ENCODE measurements at regions of chr13 and their contacts with region 1.

Region 1: GRCh38 chr13:32538621-32539246 is at the start of gene N4BP2L2:
- DNase-seq: peak; percentile 70 to 94 (median 91)
- ATAC-seq: peak; percentile 98
- H3K4me3 ChIP-seq: peak within 1 kb of the TSS; percentile 78
- H3K4me3 Mint-ChIP-seq: peak within 1 kb of the TSS; percentile 94 to 100 (median 100)
- H3K27ac ChIP-seq: peak within 1 kb of the TSS; percentile 96
- H3K27ac Mint-ChIP-seq: peak within 1 kb of the TSS; percentile 99 to 100 (median 100)
- H3K4me1 ChIP-seq: peaks cover 32 to 39% of the 10 kb centered on the region in 2 donors
- H3K4me1 Mint-ChIP-seq: peaks cover 33 to 56% (median 50%) of the 10 kb centered on the region in 7 donors
- H3K27me3 ChIP-seq: no peaks in the 10 kb centered on the region
- H3K27me3 Mint-ChIP-seq: peaks cover 0 to 11% (median 3%) of the 10 kb centered on the region in 5 donors
- total RNA-seq, gene N4BP2L2: 136 to 358 (median 226) TPM

Region 2: GRCh38 chr13:32031025-32031814 is 507.5 kb before region 1 on chr13 and contains the start of gene FRY:
- CTCF ChIA-PET with region 1: no interaction called
- POLR2A ChIA-PET with region 1: no interaction called
- intact Hi-C with region 1: loop called in 1 of 2 experiments (anchors 5 kb)
- DNase-seq: peak; percentile 34 to 67 (median 58)
- ATAC-seq: peak; percentile 86
- H3K4me3 ChIP-seq: peak within 1 kb of the TSS; percentile 71
- H3K4me3 Mint-ChIP-seq: peak within 1 kb of the TSS; percentile 82 to 99 (median 90)
- H3K27ac ChIP-seq: peak within 1 kb of the TSS; percentile 72
- H3K27ac Mint-ChIP-seq: peak within 1 kb of the TSS; percentile 77 to 97 (median 83)
- H3K4me1 ChIP-seq: peaks cover 3 to 16% of the 10 kb centered on the region in 2 donors
- H3K4me1 Mint-ChIP-seq: peaks cover 7 to 65% (median 49%) of the 10 kb centered on the region in 7 donors
- H3K27me3 ChIP-seq: no peaks in the 10 kb centered on the region
- H3K27me3 Mint-ChIP-seq: peaks cover 7 to 49% (median 13%) of the 10 kb centered on the region in 5 donors
- total RNA-seq, gene FRY: 9.9 to 39.9 (median 24.0) TPM

Region 3: GRCh38 chr13:32427852-32428580 is 110.7 kb before region 1 on chr13 and contains the start of gene N4BP2L1:
- CTCF ChIA-PET with region 1: no interaction called
- POLR2A ChIA-PET with region 1: interaction called, 26 read pairs
- intact Hi-C with region 1: loop called (anchors 1 kb)
- DNase-seq: peak; percentile 60 to 91 (median 78)
- ATAC-seq: peak; percentile 81
- H3K4me3 ChIP-seq: peak within 1 kb of the TSS; percentile 64
- H3K4me3 Mint-ChIP-seq: peak within 1 kb of the TSS; percentile 90 to 100 (median 94)
- H3K27ac ChIP-seq: peak within 1 kb of the TSS; percentile 98
- H3K27ac Mint-ChIP-seq: peak within 1 kb of the TSS; percentile 95 to 99 (median 97)
- H3K4me1 ChIP-seq: peaks cover 19 to 20% of the 10 kb centered on the region in 2 donors
- H3K4me1 Mint-ChIP-seq: peaks cover 34 to 50% (median 48%) of the 10 kb centered on the region in 7 donors
- H3K27me3 ChIP-seq: no peaks in the 10 kb centered on the region
- H3K27me3 Mint-ChIP-seq: no peaks in the 10 kb centered on the region
- total RNA-seq, gene N4BP2L1: 30.4 to 58.0 (median 47.1) TPM

Region 4: DNA sequence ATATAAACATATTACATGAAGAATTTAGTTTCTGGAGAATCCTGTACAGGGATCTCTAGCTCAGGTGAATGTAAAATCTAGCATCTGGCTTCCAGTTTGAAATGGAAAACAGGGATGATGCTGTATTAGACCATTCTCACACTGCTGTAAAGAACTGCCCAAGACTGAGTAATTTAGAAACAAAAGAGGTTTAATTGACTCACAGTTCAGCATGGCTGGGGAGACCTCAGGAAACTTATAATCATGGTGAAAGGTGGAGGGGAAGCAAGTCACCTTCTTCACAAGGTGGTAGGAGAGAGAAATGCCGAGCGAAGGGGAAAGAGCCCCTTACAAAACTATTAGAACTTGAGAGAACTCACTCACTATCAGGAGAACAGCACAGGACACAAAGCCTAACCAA is 16.9 kb after region 1 on chr13:
- CTCF ChIA-PET with region 1: no interaction called
- POLR2A ChIA-PET with region 1: no interaction called
- intact Hi-C with region 1: no loop called
- DNase-seq: no peak
- ATAC-seq: no peak
- H3K4me3 ChIP-seq: no peak overlapping the region
- H3K4me3 Mint-ChIP-seq: no peak overlapping the region
- H3K27ac ChIP-seq: no peak overlapping the region
- H3K27ac Mint-ChIP-seq: no peak overlapping the region
- H3K4me1 ChIP-seq: no peaks in the 10 kb centered on the region
- H3K4me1 Mint-ChIP-seq: no peaks in the 10 kb centered on the region
- H3K27me3 ChIP-seq: no peaks in the 10 kb centered on the region
- H3K27me3 Mint-ChIP-seq: peaks cover 0 to 6% (median 5%) of the 10 kb centered on the region in 5 donors

Region 5: GRCh38 chr13:32650705-32651311 is 112.1 kb after region 1 on chr13:
- CTCF ChIA-PET with region 1: no interaction called
- POLR2A ChIA-PET with region 1: no interaction called
- intact Hi-C with region 1: loop called in 1 of 2 experiments (anchors 5 kb)
- DNase-seq: peak in 8 of 9 donors; percentile 16 to 55 (median 41)
- ATAC-seq: peak; percentile 91
- H3K4me3 ChIP-seq: no peak overlapping the region
- H3K4me3 Mint-ChIP-seq: no peak overlapping the region
- H3K27ac ChIP-seq: no peak overlapping the region
- H3K27ac Mint-ChIP-seq: peak overlapping the region in 1 of 9 donors; percentile 21
- H3K4me1 ChIP-seq: peaks cover 0 to 10% of the 10 kb centered on the region in 2 donors
- H3K4me1 Mint-ChIP-seq: peaks cover 23 to 55% (median 40%) of the 10 kb centered on the region in 7 donors
- H3K27me3 ChIP-seq: no peaks in the 10 kb centered on the region
- H3K27me3 Mint-ChIP-seq: no peaks in the 10 kb centered on the region

Region 6: DNA sequence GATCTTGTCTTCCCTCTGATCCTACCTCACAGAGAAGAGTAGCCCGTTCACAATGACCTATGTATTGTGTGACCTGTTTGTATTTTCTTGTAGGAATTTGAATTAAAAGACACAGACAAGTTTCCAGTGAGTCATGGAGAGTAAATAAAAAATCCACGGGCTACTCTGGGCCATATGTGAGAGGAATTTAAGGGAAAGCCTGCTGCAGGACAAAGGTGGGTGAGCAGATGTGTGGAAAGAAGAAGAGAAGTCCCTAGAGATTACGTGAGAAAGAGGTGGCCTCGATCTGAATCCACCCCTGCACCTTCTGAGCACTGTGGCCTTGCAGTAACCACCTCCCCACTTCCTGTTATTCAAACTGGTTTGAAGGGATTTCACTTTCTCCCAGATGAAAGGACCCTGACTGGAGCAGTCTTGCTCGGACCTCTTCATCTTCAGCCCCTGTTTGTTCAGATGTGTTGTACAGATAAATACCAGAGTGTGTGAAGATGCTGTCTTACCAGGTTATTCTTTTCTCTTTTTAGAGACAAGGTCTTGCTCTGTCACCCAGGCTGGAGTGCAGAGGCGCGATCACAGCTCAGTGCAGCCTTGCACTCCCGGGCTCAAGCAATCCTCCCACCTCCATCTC is 252.9 kb after region 1 on chr13:
- CTCF ChIA-PET with region 1: no interaction called
- POLR2A ChIA-PET with region 1: no interaction called
- intact Hi-C with region 1: loop called in 1 of 2 experiments (anchors 5 kb)
- DNase-seq: peak in 7 of 9 donors; percentile 35 to 61 (median 47)
- ATAC-seq: peak; percentile 82
- H3K4me3 ChIP-seq: no peak overlapping the region
- H3K4me3 Mint-ChIP-seq: peak overlapping the region; percentile 14 to 75 (median 59)
- H3K27ac ChIP-seq: peak overlapping the region; percentile 55
- H3K27ac Mint-ChIP-seq: peak overlapping the region; percentile 77 to 96 (median 90)
- H3K4me1 ChIP-seq: peaks cover 0 to 28% of the 10 kb centered on the region in 2 donors
- H3K4me1 Mint-ChIP-seq: peaks cover 25 to 64% (median 50%) of the 10 kb centered on the region in 7 donors
- H3K27me3 ChIP-seq: no peaks in the 10 kb centered on the region
- H3K27me3 Mint-ChIP-seq: no peaks in the 10 kb centered on the region

Region 7: GRCh38 chr13:33723772-33724435 is 1185.2 kb after region 1 on chr13:
- CTCF ChIA-PET with region 1: no interaction called
- POLR2A ChIA-PET with region 1: no interaction called
- intact Hi-C with region 1: loop called in 1 of 2 experiments (anchors 1 kb)
- DNase-seq: peak in 8 of 9 donors; percentile 37 to 68 (median 58)
- ATAC-seq: peak; percentile 93
- H3K4me3 ChIP-seq: no peak overlapping the region
- H3K4me3 Mint-ChIP-seq: peak overlapping the region in 5 of 10 donors; percentile 5 to 65 (median 26)
- H3K27ac ChIP-seq: no peak overlapping the region
- H3K27ac Mint-ChIP-seq: peak overlapping the region in 4 of 9 donors; percentile 6 to 84 (median 27)
- H3K4me1 ChIP-seq: peaks cover 0 to 14% of the 10 kb centered on the region in 2 donors
- H3K4me1 Mint-ChIP-seq: peaks cover 2 to 33% (median 20%) of the 10 kb centered on the region in 7 donors
- H3K27me3 ChIP-seq: no peaks in the 10 kb centered on the region
- H3K27me3 Mint-ChIP-seq: no peaks in the 10 kb centered on the region